BJ (cell line): ENCODE measurements at regions of chr14 and their contacts with region 1.

Region 1: DNA sequence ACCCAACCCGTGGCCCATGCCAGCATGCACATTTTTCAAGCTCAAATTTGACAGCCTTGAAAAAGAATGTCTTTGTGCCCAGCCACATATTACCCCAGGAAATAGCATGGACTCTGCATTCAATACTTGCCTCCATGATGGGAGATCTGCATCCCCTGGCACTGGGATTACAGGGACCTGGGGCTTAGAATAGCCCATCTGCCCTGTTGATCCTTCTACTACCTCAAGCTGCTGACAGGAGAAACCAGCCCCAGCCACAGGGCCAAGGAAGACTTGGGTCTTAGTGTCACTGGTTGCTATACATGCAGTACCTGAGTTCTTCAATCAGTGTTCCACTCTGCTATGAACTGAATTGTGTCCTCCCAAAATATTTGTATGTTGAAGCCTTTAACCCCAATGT is 85.3 kb downstream of the LRRC74A start:
- DNase-seq: no peak
- H3K4me3 ChIP-seq: no peak overlapping the region
- H3K27me3 ChIP-seq: no peaks in the 10 kb centered on the region
- CTCF ChIP-seq: no peak

Region 2: DNA sequence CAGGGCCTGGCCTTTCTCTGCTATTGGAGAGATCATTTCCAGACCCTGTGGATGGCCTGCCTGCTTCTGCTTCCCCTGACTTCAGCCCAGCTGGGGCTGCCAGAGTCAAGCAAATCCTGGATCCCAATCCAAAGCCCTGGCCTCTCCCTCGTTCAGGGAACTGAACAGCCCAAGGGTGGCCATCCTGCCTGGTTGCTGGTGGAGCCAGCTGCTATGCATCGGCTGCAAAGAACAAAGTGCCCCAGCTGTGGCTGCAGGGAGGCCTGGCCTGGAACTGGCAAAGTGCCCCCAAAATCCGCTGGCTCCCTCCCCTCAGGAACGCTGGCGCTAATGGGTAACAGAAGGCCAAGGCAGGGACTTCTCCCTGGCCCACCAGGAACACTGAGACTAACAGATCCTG is 28.8 kb before region 1 on chr14:
- CTCF ChIA-PET with region 1: interaction called, 70 read pairs
- POLR2A ChIA-PET with region 1: no interaction called
- DNase-seq: no peak
- H3K4me3 ChIP-seq: no peak overlapping the region
- H3K27me3 ChIP-seq: no peaks in the 10 kb centered on the region; the same call in 1 of the 2 replicates
- CTCF ChIP-seq: no peak

Region 3: GRCh38 chr14:77023001-77023996 is 111.8 kb after region 1 on chr14:
- CTCF ChIA-PET with region 1: interaction called, 95 read pairs
- POLR2A ChIA-PET with region 1: no interaction called
- DNase-seq: no peak
- H3K4me3 ChIP-seq: peak overlapping the region; percentile 73
- H3K27me3 ChIP-seq: no peaks in the 10 kb centered on the region
- CTCF ChIP-seq: peak; percentile 43

Region 4: GRCh38 chr14:77028384-77029231 is 117.1 kb after region 1 on chr14 and contains the start of gene IRF2BPL:
- CTCF ChIA-PET with region 1: interaction called, 95 read pairs
- POLR2A ChIA-PET with region 1: no interaction called
- DNase-seq: peak; percentile 95
- H3K4me3 ChIP-seq: peak within 1 kb of the TSS; percentile 73
- H3K27me3 ChIP-seq: no peaks in the 10 kb centered on the region
- CTCF ChIP-seq: no peak
- polyA plus RNA-seq, gene IRF2BPL: 11.3 and 17.6 TPM in 2 replicates

Region 5: GRCh38 chr14:77040059-77040740 is 128.7 kb after region 1 on chr14:
- CTCF ChIA-PET with region 1: interaction called, 316 read pairs
- POLR2A ChIA-PET with region 1: no interaction called
- DNase-seq: peak; percentile 94
- H3K4me3 ChIP-seq: peak overlapping the region; percentile 22
- H3K27me3 ChIP-seq: no peaks in the 10 kb centered on the region
- CTCF ChIP-seq: no peak

Region 6: GRCh38 chr14:77059276-77059915 is 147.9 kb after region 1 on chr14:
- CTCF ChIA-PET with region 1: interaction called, 316 read pairs
- POLR2A ChIA-PET with region 1: no interaction called
- DNase-seq: peak; percentile 67
- H3K4me3 ChIP-seq: no peak overlapping the region
- H3K27me3 ChIP-seq: no peaks in the 10 kb centered on the region
- CTCF ChIP-seq: peak; percentile 46